CD14-positive monocyte (primary cell): ENCODE measurements at regions of chr1 and their contacts with region 1.

Region 1: GRCh38 chr1:167936068-167936929 is at the start of gene DCAF6:
- DNase-seq: peak; percentile 97 to 99 (median 98)
- H3K4me3 ChIP-seq: peak within 1 kb of the TSS; percentile 83 to 97 (median 90)
- H3K4me3 Mint-ChIP-seq: peak within 1 kb of the TSS; percentile 90 to 99
- H3K27ac ChIP-seq: peak within 1 kb of the TSS; percentile 90 to 97
- H3K27ac Mint-ChIP-seq: peak within 1 kb of the TSS; percentile 96 to 100 (median 100)
- H3K4me1 ChIP-seq: peaks cover 19 to 35% of the 10 kb centered on the region in 2 donors
- H3K4me1 Mint-ChIP-seq: peaks cover 34% of the 10 kb centered on the region
- H3K27me3 ChIP-seq: no peaks in the 10 kb centered on the region
- H3K27me3 Mint-ChIP-seq: peaks cover 0 to 5% (median 3%) of the 10 kb centered on the region in 3 donors
- CTCF ChIP-seq: no peak
- polyA plus RNA-seq, gene DCAF6: 11.8 to 16.1 (median 11.9) TPM

Region 2: DNA sequence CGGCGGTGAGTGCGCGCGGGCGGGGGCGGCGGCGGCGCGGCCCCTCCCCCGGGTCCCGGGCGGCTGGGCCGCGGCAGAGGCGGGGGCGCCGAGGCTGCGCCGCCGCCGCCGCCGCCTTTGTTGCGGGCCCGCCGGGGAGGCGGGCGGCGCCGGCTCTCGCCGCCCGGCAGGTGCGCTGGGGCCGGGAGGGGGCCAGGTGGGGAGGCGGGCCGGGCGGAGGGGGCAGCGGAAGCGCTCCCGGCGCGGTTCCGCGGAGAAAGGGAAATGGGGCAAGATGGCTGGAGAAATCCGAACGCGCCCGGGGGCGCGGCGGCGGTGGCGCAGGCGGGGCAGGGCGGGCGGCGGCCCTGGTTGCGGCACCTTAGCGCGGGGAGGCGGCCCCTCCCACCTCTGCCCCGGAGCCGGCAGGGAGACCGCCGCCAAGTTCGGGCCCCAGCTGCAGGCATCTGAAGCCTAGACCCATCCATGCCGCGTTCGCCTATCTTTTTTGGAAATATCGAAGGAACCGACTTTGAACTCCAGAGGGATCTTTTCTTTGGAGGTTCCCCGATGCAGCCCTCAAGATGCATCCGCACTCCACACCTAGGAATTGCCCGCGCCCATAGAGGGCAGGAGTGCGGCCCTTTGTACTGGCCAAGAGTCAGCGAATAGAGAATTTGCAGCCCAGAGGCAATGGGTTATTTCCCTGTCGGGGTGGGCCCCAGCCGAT is 1096.5 kb before region 1 on chr1:
- intact Hi-C with region 1: loop called in 1 of 2 experiments (anchors 10 kb)
- DNase-seq: peak; percentile 26 to 34 (median 33)
- H3K4me3 ChIP-seq: peak overlapping the region; percentile 58 to 89 (median 83)
- H3K4me3 Mint-ChIP-seq: peak overlapping the region; percentile 83 to 91
- H3K27ac ChIP-seq: peak overlapping the region; percentile 39 to 94
- H3K27ac Mint-ChIP-seq: peak overlapping the region; percentile 71 to 96 (median 87)
- H3K4me1 ChIP-seq: peaks cover 24 to 35% of the 10 kb centered on the region in 2 donors
- H3K4me1 Mint-ChIP-seq: peaks cover 38% of the 10 kb centered on the region
- H3K27me3 ChIP-seq: no peaks in the 10 kb centered on the region
- H3K27me3 Mint-ChIP-seq: no peaks in the 10 kb centered on the region
- CTCF ChIP-seq: no peak

Region 3: DNA sequence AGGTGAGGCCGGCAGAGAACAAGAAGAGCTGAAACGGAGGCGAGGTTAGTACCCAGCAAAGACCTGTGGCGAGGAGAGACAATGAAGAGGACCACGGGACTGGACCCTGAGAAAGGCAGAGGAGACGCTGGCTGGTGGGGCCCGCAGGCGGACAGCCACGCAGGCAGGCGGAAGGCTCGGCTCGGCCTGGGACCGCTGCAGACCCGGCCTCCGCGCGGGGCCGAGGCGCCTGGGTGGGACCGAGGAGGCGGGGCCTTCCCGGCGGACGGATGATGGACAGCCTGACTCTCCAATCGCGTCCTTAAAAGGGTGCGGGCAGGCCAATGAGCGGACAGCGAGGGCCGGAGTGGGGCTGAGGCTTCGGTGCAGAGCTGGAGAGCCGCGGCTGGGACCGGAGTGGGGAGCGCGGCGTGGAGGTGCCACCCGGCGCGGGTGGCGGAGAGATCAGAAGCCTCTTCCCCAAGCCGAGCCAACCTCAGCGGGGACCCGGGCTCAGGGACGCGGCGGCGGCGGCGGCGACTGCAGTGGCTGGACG is 214.6 kb before region 1 on chr1 and contains the start of gene MPZL1:
- intact Hi-C with region 1: loop called in 1 of 2 experiments (anchors 5 kb)
- DNase-seq: peak; percentile 89 to 93 (median 91)
- H3K4me3 ChIP-seq: peak within 1 kb of the TSS; percentile 87 to 98 (median 89)
- H3K4me3 Mint-ChIP-seq: peak within 1 kb of the TSS; percentile 95 to 99
- H3K27ac ChIP-seq: peak within 1 kb of the TSS; percentile 55 to 83
- H3K27ac Mint-ChIP-seq: peak within 1 kb of the TSS; percentile 85 to 95 (median 92)
- H3K4me1 ChIP-seq: peaks cover 28 to 37% of the 10 kb centered on the region in 2 donors
- H3K4me1 Mint-ChIP-seq: peaks cover 58% of the 10 kb centered on the region
- H3K27me3 ChIP-seq: no peaks in the 10 kb centered on the region
- H3K27me3 Mint-ChIP-seq: peaks cover 1 to 6% (median 2%) of the 10 kb centered on the region in 3 donors
- CTCF ChIP-seq: no peak
- polyA plus RNA-seq, gene MPZL1: 23.1 to 63.6 (median 61.8) TPM